PC-9 (cell line): ENCODE measurements at regions of chr2 and their contacts with region 1.

Region 1: DNA sequence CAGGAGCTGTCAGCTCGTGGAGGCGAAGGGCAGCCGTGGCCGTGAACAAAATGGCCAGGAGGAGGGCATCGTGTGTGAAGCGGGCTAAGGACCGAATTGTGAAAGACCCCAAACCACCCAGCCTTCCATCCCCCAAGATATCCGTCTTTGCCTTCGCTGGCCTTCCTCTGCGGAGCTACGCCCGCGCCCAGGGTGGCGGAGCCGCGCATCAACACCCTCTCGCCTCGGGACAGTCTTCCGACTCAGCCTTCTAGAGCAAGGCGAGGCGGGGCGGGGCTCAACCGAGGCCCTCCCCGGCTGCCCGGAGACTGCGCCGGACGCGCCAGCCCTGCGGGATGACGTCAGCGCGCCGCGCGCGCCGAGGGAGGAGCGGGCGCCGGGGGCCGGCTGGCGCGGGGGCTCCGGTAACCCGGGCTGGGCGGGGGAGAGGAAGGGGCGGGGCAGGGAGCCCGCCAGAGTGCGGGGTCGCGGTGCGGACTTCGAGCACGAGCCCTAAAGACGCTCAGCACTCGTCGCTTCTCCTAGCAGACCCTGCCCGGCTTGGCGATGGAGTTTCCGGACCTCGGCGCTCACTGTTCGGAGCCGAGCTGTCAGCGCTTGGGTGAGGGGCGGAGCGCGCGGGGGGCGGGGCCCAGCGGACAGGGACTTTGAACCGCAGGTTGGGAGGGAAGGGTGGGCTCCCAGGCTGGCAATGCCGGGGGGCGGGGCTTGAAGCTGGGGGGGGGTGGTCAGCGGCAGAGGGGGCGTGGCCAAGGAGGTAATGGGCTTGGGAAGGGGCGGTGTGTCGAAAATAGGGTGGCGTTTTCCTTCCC is at the start of gene ZFAND2B:
- DNase-seq: peak; percentile 76 to 96
- H3K4me3 ChIP-seq: peak within 1 kb of the TSS; percentile 78
- H3K27ac ChIP-seq: peak within 1 kb of the TSS; percentile 40
- H3K4me1 ChIP-seq: peaks cover 18% of the 10 kb centered on the region
- H3K27me3 ChIP-seq: no peaks in the 10 kb centered on the region
- CTCF ChIP-seq: no peak
- total RNA-seq, gene ZFAND2B: 24.6 and 39.4 TPM in 2 replicates

Region 2: GRCh38 chr2:218710687-218711549 is 495.7 kb before region 1 on chr2 and contains the start of gene TTLL4:
- CTCF ChIA-PET with region 1: interaction called, 10 read pairs
- POLR2A ChIA-PET with region 1: no interaction called
- intact Hi-C with region 1: no loop called
- DNase-seq: peak; percentile 79 to 96
- H3K4me3 ChIP-seq: peak within 1 kb of the TSS; percentile 95
- H3K27ac ChIP-seq: peak within 1 kb of the TSS; percentile 55
- H3K4me1 ChIP-seq: peaks cover 13% of the 10 kb centered on the region
- H3K27me3 ChIP-seq: no peaks in the 10 kb centered on the region
- CTCF ChIP-seq: peak; percentile 79
- total RNA-seq, gene TTLL4: 43.9 and 57.1 TPM in 2 replicates

Region 3: DNA sequence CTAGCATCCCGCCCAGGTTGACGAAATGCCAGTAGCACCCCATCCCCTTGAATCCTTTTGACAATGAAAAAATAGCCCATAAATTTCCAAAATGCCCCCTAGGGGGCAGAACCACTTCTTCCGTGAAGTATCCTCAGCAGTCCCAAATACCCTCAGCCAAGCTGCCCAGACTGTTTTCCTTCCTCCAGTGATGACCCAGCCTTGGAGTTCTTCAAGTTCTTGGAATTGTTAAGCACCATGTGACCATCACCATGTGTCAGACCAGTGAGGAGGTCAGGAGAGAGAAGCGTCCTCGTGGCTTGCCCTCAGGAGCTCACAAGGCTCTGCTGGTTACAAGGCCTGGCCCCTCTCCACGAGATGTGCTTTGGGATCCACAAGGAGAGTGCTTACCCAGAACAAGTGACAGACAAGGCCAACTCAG is 35.4 kb before region 1 on chr2:
- CTCF ChIA-PET with region 1: interaction called, 3 read pairs
- POLR2A ChIA-PET with region 1: no interaction called
- intact Hi-C with region 1: loop called (anchors 1 kb)
- DNase-seq: peak in 1 of 2 experiments; percentile 36
- H3K4me3 ChIP-seq: no peak overlapping the region
- H3K27ac ChIP-seq: no peak overlapping the region
- H3K4me1 ChIP-seq: peaks cover 11% of the 10 kb centered on the region
- H3K27me3 ChIP-seq: no peaks in the 10 kb centered on the region
- CTCF ChIP-seq: peak; percentile 82

Region 4: DNA sequence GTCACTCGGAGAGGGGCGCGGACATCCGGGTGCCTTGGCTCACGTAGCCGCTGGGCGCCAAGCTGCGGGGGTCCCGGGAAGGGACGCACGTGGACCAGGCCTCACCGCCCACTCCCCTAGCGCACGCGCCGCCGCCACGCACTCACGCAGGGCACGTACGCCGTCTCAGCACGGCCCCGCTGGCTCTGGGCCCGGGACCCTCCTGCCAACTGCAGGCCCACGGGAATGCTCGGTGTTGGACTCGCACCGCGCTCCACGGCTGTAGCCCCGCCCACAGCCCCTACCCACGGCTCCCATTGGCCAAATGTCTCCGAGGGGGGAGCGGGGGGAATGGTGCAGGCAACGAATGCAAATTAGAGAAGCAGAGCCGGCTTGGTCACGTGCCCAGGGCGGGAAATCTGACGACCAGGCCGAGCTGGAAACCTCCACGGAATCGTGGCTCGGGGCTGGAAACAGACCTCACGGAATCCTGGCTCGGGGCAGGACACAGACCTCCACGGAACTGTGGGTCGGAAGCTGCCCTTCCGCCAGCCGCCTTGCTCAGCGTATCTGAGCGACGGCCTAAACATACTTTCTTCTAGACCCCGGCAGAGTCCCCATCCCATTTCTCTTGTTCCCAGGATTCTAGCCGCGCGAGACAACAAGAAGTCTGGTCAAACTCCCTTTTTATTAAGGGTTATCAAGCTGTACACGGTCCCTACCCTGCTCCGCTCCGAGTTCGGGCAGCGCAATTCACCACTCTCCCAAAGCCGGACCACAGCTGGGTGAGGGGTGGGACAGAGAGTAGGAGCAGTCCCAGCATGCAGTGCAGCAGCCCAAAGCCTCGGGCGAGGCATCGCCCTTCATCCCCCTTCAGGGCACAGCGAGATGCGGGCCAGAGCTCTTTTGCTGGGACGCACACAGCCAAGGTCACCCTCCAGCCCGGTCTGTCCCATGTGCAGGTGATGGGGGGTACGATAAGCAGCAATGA is 12.4 kb after region 1 on chr2 and contains the start of gene ABCB6:
- CTCF ChIA-PET with region 1: interaction called, 3 read pairs
- POLR2A ChIA-PET with region 1: interaction called, 17 read pairs
- intact Hi-C with region 1: loop called (anchors 1 kb)
- DNase-seq: peak; percentile 67 to 91
- H3K4me3 ChIP-seq: peak within 1 kb of the TSS; percentile 64
- H3K27ac ChIP-seq: peak within 1 kb of the TSS; percentile 90
- H3K4me1 ChIP-seq: peaks cover 13% of the 10 kb centered on the region
- H3K27me3 ChIP-seq: no peaks in the 10 kb centered on the region
- CTCF ChIP-seq: no peak
- total RNA-seq, gene ABCB6: 33.7 and 41.4 TPM in 2 replicates

Region 5: GRCh38 chr2:219402665-219403515 is 196.2 kb after region 1 on chr2:
- CTCF ChIA-PET with region 1: no interaction called
- POLR2A ChIA-PET with region 1: interaction called, 14 read pairs
- intact Hi-C with region 1: no loop called
- DNase-seq: peak; percentile 67 to 78
- H3K4me3 ChIP-seq: no peak overlapping the region
- H3K27ac ChIP-seq: no peak overlapping the region
- H3K4me1 ChIP-seq: peaks cover 36% of the 10 kb centered on the region
- H3K27me3 ChIP-seq: no peaks in the 10 kb centered on the region
- CTCF ChIP-seq: peak; percentile 92

Region 6: DNA sequence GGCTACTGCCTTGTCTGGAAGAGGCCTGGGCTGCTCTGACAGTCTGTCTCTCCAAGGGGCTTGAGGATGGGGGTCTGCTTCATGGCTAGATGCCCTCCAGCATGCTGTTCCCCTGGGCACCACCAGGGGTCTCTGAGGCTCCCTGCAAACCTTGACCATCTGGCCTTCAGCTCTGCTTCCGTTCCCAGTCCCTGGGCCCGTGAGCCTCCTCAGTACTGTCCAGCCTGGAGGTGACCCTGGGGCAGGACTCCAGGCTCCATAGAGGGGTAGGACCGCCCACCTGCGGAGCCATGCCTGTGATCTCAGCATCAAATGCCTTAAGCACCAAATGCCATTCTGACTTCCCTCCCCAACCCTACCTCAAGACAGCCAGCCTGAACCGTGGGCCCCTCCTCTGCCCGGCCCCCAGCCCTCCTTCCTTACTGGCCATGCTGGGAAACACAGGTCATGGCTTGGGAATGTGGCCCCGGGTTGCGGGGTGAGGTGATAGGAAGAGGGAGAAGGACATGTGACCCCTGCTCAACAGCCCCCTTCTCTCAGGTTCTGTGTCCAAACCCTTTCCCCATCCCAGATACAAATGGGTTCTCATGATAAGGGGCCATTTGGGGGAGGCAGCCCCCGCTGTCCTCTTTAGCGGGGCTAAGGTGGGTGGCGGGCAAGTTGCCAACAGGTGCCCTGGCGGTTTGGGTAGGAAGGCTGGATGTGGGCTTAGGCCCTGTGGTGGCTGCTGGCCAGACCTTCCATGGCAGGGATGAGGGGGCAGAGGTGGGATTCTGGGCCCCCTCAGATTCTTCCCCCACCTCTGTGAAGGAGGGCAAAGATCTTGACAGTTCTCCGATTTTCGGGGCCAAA is 253.0 kb after region 1 on chr2:
- CTCF ChIA-PET with region 1: no interaction called
- POLR2A ChIA-PET with region 1: no interaction called
- intact Hi-C with region 1: no loop called
- DNase-seq: peak in 1 of 2 experiments; percentile 50
- H3K4me3 ChIP-seq: no peak overlapping the region
- H3K27ac ChIP-seq: no peak overlapping the region
- H3K4me1 ChIP-seq: peaks cover 27% of the 10 kb centered on the region
- H3K27me3 ChIP-seq: no peaks in the 10 kb centered on the region
- CTCF ChIP-seq: peak; percentile 91